Natural killer cell (primary cell): ENCODE measurements at regions of chr6 and their contacts with region 1.

Region 1: DNA sequence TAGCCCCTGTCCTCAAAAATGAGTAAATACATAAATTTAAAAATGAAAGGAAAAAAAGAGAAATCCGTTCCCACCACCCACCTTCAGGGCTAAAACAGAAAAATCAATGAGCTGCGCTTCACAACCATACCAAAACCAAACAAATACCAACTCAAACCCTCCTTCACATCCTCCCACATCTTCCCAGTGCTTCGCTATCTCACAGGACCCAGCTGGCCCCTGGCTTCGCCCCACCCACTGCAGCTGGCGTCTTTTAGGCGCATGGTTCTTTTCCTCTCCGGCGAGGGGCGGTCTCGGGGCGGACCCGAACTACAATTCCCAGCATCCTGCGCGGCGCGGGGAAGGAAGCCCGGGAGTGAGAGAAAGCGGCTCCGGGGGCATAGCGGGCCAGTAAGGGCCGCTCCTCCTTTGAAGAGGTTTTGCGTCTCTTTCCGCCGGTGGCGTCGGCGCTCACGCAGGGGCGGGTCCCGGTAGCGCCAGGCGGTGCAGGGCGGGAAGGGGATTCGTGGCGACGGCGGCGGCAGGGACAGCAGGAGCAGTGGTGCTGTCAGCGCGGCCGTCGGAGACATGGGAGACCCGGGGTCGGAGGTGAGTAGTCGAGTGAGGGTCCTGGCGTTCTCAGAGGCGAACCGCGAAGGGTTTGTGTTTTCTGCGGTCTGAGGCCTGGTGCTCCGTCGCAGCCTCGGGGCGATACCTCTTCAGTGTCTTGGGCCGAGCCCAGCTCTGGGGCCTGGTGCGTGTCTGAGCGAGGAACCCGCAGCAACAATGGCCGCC is at the start of gene ZNF451:
- DNase-seq: peak; percentile 93 to 96
- ATAC-seq: peak; percentile 91 to 97 (median 93)
- H3K4me3 ChIP-seq: peak within 1 kb of the TSS; percentile 71
- H3K4me3 Mint-ChIP-seq: peak within 1 kb of the TSS; percentile 94
- H3K27ac ChIP-seq: peak within 1 kb of the TSS; percentile 78
- H3K27ac Mint-ChIP-seq: peak within 1 kb of the TSS; percentile 87 to 93
- H3K4me1 ChIP-seq: peaks cover 6% of the 10 kb centered on the region
- H3K4me1 Mint-ChIP-seq: peaks cover 31 to 35% of the 10 kb centered on the region in 2 donors
- H3K27me3 ChIP-seq: no peaks in the 10 kb centered on the region
- H3K27me3 Mint-ChIP-seq: no peaks in the 10 kb centered on the region
- CTCF ChIP-seq: no peak
- total RNA-seq, gene ZNF451: 121 to 131 (median 122) TPM

Region 2: GRCh38 chr6:55774286-55774935 is 1315.5 kb before region 1 on chr6:
- intact Hi-C with region 1: no loop called
- DNase-seq: no peak
- ATAC-seq: no peak
- H3K4me3 ChIP-seq: no peak overlapping the region
- H3K4me3 Mint-ChIP-seq: no peak overlapping the region
- H3K27ac ChIP-seq: no peak overlapping the region
- H3K27ac Mint-ChIP-seq: no peak overlapping the region
- H3K4me1 ChIP-seq: no peaks in the 10 kb centered on the region
- H3K4me1 Mint-ChIP-seq: no peaks in the 10 kb centered on the region
- H3K27me3 ChIP-seq: no peaks in the 10 kb centered on the region
- H3K27me3 Mint-ChIP-seq: no peaks in the 10 kb centered on the region
- CTCF ChIP-seq: no peak

Region 3: GRCh38 chr6:57048577-57048976 is 41.3 kb before region 1 on chr6:
- intact Hi-C with region 1: loop called (anchors 2 kb)
- DNase-seq: no peak
- ATAC-seq: no peak
- H3K4me3 ChIP-seq: no peak overlapping the region
- H3K4me3 Mint-ChIP-seq: peak overlapping the region; percentile 46
- H3K27ac ChIP-seq: no peak overlapping the region
- H3K27ac Mint-ChIP-seq: peak overlapping the region; percentile 48 to 54
- H3K4me1 ChIP-seq: peaks cover 4% of the 10 kb centered on the region
- H3K4me1 Mint-ChIP-seq: peaks cover 30 to 33% of the 10 kb centered on the region in 2 donors
- H3K27me3 ChIP-seq: no peaks in the 10 kb centered on the region
- H3K27me3 Mint-ChIP-seq: peaks cover 0 to 5% of the 10 kb centered on the region in 2 donors
- CTCF ChIP-seq: no peak

Region 4: DNA sequence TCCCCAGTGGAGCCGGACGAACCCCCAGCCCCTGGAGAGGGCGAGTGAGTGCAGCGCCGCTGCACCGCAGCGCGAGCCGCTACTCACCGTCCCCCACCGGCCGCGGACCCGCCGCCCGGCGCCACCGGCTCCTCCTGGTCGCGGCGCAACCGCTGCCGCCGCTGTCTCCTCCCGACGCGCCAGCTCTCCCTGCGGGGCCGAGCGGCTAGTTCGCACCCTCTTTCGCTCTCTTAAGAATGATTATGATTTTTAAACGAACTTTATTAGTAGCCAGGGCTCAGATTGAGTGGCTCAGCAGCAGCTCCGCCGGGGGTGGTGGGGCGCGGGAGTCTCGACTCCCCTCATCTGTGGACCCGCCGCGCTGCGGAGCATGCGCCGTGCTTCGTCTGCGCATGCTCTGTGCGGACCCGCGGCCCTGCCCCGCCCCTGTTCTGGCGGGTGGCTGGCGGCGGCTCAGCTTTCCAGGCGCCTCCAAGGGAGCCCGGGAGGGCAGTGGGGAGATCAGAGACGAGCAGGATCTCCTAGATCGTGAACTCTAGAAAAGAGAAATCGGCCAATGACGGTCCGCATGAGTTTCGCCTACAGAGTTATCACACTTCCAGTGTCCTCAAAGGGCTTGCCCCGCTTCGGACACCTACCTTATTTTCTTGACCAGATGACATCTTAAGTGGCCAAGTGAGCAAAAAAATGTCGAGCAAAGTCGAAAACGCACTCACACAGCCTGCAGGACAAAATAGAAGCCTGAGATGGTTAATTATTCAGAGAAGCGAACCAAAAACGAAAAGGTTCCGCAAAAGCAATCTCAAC is 132.3 kb after region 1 on chr6 and contains the start of gene RAB23:
- intact Hi-C with region 1: loop called (anchors 2 kb)
- DNase-seq: peak; percentile 83 to 93
- ATAC-seq: peak; percentile 90 to 91 (median 91)
- H3K4me3 ChIP-seq: peak within 1 kb of the TSS; percentile 98
- H3K4me3 Mint-ChIP-seq: peak within 1 kb of the TSS; percentile 99
- H3K27ac ChIP-seq: peak within 1 kb of the TSS; percentile 36
- H3K27ac Mint-ChIP-seq: peak within 1 kb of the TSS; percentile 82 to 94
- H3K4me1 ChIP-seq: peaks cover 7% of the 10 kb centered on the region
- H3K4me1 Mint-ChIP-seq: peaks cover 11% of the 10 kb centered on the region in 2 donors
- H3K27me3 ChIP-seq: peaks cover 11% of the 10 kb centered on the region
- H3K27me3 Mint-ChIP-seq: peaks cover 24 to 37% of the 10 kb centered on the region in 2 donors
- CTCF ChIP-seq: no peak
- total RNA-seq, gene RAB23: 0.31 to 1.3 (median 0.77) TPM